Esophagus muscularis mucosa (tissue), 4 donors: ENCODE measurements at regions of chr4 and their contacts with region 1.

Region 1: DNA sequence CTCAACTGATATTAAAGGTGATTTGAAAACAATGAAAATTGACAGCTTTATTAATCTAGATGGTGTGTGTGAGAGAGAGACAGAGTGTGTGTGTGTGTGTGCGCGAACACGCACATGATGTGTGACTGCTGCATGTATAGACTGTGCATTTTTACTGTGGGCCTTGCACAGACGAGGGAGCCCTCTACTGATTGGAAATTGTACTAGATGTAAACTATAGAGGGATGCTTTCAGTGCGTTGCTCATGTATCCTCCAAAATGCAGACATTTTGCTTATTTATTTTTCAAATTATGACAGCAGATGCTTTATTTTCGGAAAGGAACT is 168.4 kb upstream of the GK2 start:
- DNase-seq: no peak
- H3K4me3 ChIP-seq: no peak overlapping the region
- H3K27ac ChIP-seq: peak overlapping the region; percentile 28 to 65 (median 60)
- H3K4me1 ChIP-seq: peaks cover 0 to 35% (median 23%) of the 10 kb centered on the region in 4 donors
- H3K27me3 ChIP-seq: no peaks in the 10 kb centered on the region
- CTCF ChIP-seq: peak; percentile 19 to 41 (median 39)
- EP300 ChIP-seq: no peak
- POLR2A ChIP-seq: no peak

Region 2: GRCh38 chr4:79042079-79042674 is 534.2 kb before region 1 on chr4:
- intact Hi-C with region 1: loop called (anchors 5 kb)
- DNase-seq: no peak
- H3K4me3 ChIP-seq: no peak overlapping the region
- H3K27ac ChIP-seq: peak overlapping the region in 1 of 4 donors; percentile 31
- H3K4me1 ChIP-seq: peaks cover 0 to 45% (median 25%) of the 10 kb centered on the region in 4 donors
- H3K27me3 ChIP-seq: no peaks in the 10 kb centered on the region
- CTCF ChIP-seq: peak; percentile 60 to 68 (median 65)
- EP300 ChIP-seq: no peak
- POLR2A ChIP-seq: no peak